Left cardiac atrium (tissue), 4 donors: ENCODE measurements at regions of chr10 and their contacts with region 1.

Region 1: GRCh38 chr10:93482145-93482834 is at the start of gene MYOF:
- DNase-seq: peak; percentile 58
- ATAC-seq: peak; percentile 91
- total RNA-seq, gene MYOF: 24.3 to 33.0 TPM

Region 2: GRCh38 chr10:93376372-93377293 is 105.7 kb before region 1 on chr10:
- intact Hi-C with region 1: loop called (anchors 1 to 5 kb)
- DNase-seq: peak; percentile 37
- ATAC-seq: peak; percentile 92 to 95

Region 3: GRCh38 chr10:93417266-93417886 is 64.9 kb before region 1 on chr10:
- intact Hi-C with region 1: loop called in 1 of 2 experiments (anchors 5 kb)
- DNase-seq: peak; percentile 58
- ATAC-seq: peak; percentile 81 to 91